ENCODE measurements at regions of chr9 and their contacts with region 1.

Region 1: GRCh38 chr9:130707225-130707976 is 13.8 kb downstream of the EXOSC2 start:
- DNase-seq: peak in 5 of 10 donors; percentile 23 to 65 (median 47)

Region 2: DNA sequence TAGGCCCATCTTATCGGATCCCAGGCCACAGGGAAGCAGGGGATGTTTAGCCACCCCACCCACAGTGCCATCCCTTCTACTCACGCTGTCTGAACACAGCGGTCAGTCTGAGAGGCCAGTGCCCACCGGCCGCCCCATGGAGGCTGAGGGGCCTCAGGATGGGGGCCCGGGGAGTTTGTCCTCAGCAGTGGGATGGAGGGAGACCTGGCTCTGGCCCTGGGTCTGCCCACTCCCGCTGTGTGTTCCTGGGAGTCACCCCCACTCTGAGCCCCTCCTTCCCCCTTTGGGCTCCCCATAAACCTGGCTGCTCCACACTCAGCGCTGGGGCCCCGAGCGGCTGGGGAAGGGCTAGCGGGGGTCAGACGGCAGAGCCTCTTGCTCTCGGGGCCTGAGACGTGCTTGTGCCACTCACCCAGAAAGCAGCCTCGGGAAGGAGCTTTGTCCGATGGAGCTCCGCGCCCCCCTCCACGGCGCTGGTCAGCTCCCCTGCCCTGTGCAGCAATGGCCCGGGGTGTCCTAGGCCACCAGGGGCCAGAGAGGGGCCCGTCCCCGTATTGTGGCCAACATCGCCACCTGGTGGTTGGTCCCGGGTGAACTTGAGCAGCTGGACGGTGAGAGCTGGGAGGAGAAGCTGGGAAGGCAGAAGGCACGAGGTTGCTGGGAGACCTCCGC is 290.7 kb after region 1 on chr9:
- intact Hi-C with region 1: loop called (anchors 5 kb)
- DNase-seq: peak; percentile 49 to 95 (median 79)

Region 3: DNA sequence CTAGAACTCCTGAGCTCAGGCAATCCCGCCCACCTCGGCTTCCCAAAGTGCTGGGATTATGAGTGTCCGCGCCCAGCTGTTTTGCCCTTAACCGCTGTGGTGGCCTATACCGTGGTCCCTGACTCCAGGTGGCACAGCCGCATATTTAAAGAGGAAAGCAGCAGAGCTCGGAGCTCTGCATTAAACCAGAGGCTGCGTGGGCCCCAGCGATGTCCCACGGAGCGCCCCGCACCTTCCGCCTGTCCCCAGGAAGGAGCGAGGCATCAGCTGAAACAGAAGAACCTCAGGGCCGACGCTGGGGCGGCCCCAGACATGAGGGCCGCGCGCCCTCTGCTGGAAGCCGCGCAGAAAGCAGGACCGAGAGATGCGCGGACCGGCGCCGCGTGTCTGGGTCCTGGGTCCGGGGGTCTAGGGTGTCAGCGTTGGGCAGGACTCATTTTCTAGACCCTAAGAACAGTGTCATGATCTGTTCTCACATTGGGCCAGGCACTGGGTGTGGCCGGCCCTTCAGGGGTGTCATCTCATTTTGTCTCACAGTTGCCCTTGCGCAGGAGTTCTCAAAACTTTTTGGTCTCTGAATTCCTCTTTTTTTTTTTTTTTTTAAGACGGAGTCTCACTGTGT is 339.3 kb after region 1 on chr9:
- intact Hi-C with region 1: loop called (anchors 5 kb)
- DNase-seq: peak; percentile 31 to 96 (median 68)

Measured in posterior cingulate gyrus (tissue), 11 donors.